WTC11 (cell line): ENCODE measurements at regions of chr15 and their contacts with region 1.

Region 1: GRCh38 chr15:34987985-34988873 is at the start of gene ZNF770:
- DNase-seq: peak; percentile 76
- ATAC-seq: peak; percentile 86
- H3K4me3 Mint-ChIP-seq: peak within 1 kb of the TSS; percentile 97
- H3K27ac Mint-ChIP-seq: peak within 1 kb of the TSS; percentile 95
- H3K4me1 Mint-ChIP-seq: peaks cover 52% of the 10 kb centered on the region
- H3K27me3 Mint-ChIP-seq: no peaks in the 10 kb centered on the region
- CTCF ChIP-seq: no peak
- total RNA-seq, gene ZNF770: 142 to 158 TPM (median 154 TPM) in 3 replicates

Region 2: DNA sequence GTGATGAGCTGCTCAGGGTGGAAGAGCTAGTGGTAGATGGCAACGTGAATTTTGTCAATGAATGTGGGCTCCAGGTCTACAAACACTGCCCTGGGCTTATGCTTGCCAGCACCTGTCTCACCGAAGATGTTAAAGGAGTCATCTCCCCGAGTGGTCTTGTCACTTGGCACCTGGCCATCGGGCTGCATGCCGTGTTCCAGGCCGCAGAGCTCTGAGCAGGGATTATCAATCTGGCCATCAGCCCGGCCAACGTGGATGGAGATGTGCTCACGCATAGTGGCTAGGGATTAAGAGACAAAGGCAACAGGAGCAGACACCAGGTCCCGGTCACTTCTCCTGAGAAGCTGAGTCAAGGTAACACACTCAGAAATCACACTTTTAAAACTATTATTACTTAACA is 138.1 kb before region 1 on chr15:
- CTCF ChIA-PET with region 1: no interaction called
- POLR2A ChIA-PET with region 1: no interaction called
- DNase-seq: no peak
- ATAC-seq: no peak
- H3K4me3 Mint-ChIP-seq: no peak overlapping the region
- H3K27ac Mint-ChIP-seq: no peak overlapping the region
- H3K4me1 Mint-ChIP-seq: no peaks in the 10 kb centered on the region
- H3K27me3 Mint-ChIP-seq: no peaks in the 10 kb centered on the region
- CTCF ChIP-seq: no peak

Region 3: GRCh38 chr15:34969340-34970097 is 18.7 kb before region 1 on chr15 and contains the start of gene AQR:
- CTCF ChIA-PET with region 1: interaction called, 20 read pairs
- POLR2A ChIA-PET with region 1: interaction called, 14 read pairs
- DNase-seq: peak; percentile 96
- ATAC-seq: peak; percentile 99
- H3K4me3 Mint-ChIP-seq: peak within 1 kb of the TSS; percentile 99
- H3K27ac Mint-ChIP-seq: peak within 1 kb of the TSS; percentile 99
- H3K4me1 Mint-ChIP-seq: peaks cover 26% of the 10 kb centered on the region
- H3K27me3 Mint-ChIP-seq: no peaks in the 10 kb centered on the region
- CTCF ChIP-seq: peak; percentile 41
- total RNA-seq, gene AQR: 55.6 to 62.1 TPM (median 57.9 TPM) in 3 replicates